HAP-1 (cell line): ENCODE measurements at regions of chr5 and their contacts with region 1.

Region 1: GRCh38 chr5:171913987-171914273 is 92.5 kb downstream of the FBXW11 start:
- DNase-seq: no peak
- H3K4me3 ChIP-seq: no peak overlapping the region
- H3K4me1 ChIP-seq: peaks cover 9% of the 10 kb centered on the region; the same call in 1 of the 2 replicates
- H3K27me3 ChIP-seq: no peaks in the 10 kb centered on the region

Region 2: DNA sequence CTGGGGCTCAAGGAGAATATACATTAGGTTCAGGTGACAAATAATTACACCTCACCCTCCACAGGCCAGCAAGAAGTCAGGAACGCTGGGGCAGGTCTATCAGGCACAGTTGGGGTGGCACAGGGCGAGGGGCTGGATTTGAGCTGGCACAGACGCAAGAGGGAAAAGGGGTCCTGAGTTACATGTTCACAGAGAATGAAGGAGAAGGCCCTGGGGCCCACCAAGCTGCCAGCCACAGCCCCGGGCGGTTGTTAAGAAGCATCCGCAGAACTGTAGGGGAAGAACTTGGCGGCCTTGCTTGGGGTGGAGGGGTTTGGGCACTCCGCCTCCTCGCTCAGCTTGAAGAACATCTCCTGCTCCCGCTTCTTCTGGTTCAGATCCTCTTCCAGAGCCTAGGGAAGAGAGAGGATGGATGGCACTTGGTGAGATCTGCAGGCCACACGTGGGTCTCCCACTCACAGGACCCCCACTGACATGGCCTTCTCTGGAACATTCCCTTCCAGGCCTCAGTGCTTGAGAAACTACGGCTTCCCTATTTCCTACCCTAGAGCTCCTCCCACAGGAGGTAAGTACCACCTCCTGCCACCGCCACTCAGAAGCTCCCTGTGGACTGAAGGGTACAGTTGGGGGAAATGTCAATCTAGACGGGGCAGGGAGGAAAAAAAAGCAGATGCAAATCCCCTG is 130.8 kb after region 1 on chr5:
- in situ Hi-C with region 1: loop called (anchors 5 kb)
- DNase-seq: no peak
- H3K4me3 ChIP-seq: no peak overlapping the region
- H3K4me1 ChIP-seq: peaks cover 2% of the 10 kb centered on the region
- H3K27me3 ChIP-seq: no peaks in the 10 kb centered on the region

Region 3: GRCh38 chr5:172443441-172444109 is 529.6 kb after region 1 on chr5:
- in situ Hi-C with region 1: no loop called
- DNase-seq: no peak
- H3K4me3 ChIP-seq: no peak overlapping the region
- H3K4me1 ChIP-seq: no peaks in the 10 kb centered on the region
- H3K27me3 ChIP-seq: no peaks in the 10 kb centered on the region